Endothelial cell of umbilical vein (primary cell): ENCODE measurements at regions of chr7 and their contacts with region 1.

Region 1: DNA sequence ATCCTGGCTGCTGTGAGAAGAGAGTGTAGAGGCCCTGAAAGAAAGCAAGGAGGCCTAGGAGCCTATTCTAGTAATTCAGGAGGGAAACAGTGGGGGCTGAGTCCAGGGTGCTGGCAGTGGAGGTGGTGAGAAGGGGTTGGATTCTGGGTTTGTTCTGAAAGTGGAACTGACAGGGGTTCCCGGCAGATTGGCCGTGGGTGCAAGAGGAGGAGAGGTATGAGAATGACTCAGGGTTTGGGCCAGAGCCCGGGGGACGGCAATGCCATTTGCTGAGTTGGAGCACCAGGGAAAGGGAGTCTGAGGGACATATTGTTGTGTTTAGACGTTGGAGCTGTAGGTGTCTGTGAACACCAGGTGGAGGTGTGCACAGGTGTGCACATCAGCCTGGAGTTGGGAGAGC is 38.5 kb downstream of the NPTX2 start:
- DNase-seq: no peak
- H3K4me3 ChIP-seq: no peak overlapping the region
- H3K27ac ChIP-seq: no peak overlapping the region
- H3K4me1 ChIP-seq: no peaks in the 10 kb centered on the region
- H3K27me3 ChIP-seq: no peaks in the 10 kb centered on the region
- CTCF ChIP-seq: no peak
- POLR2A ChIP-seq: no peak

Region 2: DNA sequence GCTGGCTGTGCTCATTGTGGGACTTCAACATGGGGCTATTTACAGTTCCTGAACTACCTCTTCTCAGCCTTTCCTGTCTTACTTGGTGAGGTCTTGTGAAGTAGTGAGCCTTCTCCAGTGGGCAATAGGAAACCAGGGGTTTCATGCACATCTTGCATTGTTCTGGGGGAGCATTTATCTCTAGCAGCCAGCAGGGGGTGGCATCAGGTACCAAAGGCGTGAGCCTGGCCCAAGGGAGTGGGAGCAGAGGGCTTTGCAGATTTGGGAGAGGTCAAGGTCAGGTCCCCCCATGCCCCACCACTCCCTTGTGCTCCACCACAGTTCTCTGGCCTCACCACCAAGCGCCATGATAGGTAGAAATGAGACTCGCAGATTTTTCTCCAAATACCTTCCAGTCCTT is 123.9 kb before region 1 on chr7:
- CTCF ChIA-PET with region 1: no interaction called
- POLR2A ChIA-PET with region 1: no interaction called
- dilution Hi-C with region 1: no loop called
- intact Hi-C with region 1: no loop called
- DNase-seq: no peak
- H3K4me3 ChIP-seq: no peak overlapping the region
- H3K27ac ChIP-seq: no peak overlapping the region
- H3K4me1 ChIP-seq: no peaks in the 10 kb centered on the region
- H3K27me3 ChIP-seq: no peaks in the 10 kb centered on the region
- CTCF ChIP-seq: no peak
- POLR2A ChIP-seq: no peak

Region 3: GRCh38 chr7:98722402-98722801 is 66.8 kb after region 1 on chr7:
- CTCF ChIA-PET with region 1: no interaction called
- POLR2A ChIA-PET with region 1: no interaction called
- dilution Hi-C with region 1: no loop called
- intact Hi-C with region 1: loop called (anchors 2 kb)
- DNase-seq: no peak
- H3K4me3 ChIP-seq: no peak overlapping the region
- H3K27ac ChIP-seq: no peak overlapping the region
- H3K4me1 ChIP-seq: no peaks in the 10 kb centered on the region
- H3K27me3 ChIP-seq: no peaks in the 10 kb centered on the region
- CTCF ChIP-seq: no peak
- POLR2A ChIP-seq: no peak